ENCODE measurements at regions of chr3 and their contacts with region 1.

Region 1: GRCh38 chr3:124834723-124835718 is 52.1 kb downstream of the ITGB5 start:
- DNase-seq: peak; percentile 45 to 74 (median 67)
- ATAC-seq: peak in 3 of 4 donors; percentile 40 to 66 (median 50)
- H3K4me3 ChIP-seq: peak overlapping the region in 2 of 12 donors; percentile 8 to 19
- H3K27ac ChIP-seq: peak overlapping the region; percentile 6 to 92 (median 80)
- H3K4me1 ChIP-seq: peaks cover 12 to 90% (median 76%) of the 10 kb centered on the region in 12 donors
- H3K27me3 ChIP-seq: no peaks in the 10 kb centered on the region
- CTCF ChIP-seq: no peak
- POLR2A ChIP-seq: no peak

Region 2: DNA sequence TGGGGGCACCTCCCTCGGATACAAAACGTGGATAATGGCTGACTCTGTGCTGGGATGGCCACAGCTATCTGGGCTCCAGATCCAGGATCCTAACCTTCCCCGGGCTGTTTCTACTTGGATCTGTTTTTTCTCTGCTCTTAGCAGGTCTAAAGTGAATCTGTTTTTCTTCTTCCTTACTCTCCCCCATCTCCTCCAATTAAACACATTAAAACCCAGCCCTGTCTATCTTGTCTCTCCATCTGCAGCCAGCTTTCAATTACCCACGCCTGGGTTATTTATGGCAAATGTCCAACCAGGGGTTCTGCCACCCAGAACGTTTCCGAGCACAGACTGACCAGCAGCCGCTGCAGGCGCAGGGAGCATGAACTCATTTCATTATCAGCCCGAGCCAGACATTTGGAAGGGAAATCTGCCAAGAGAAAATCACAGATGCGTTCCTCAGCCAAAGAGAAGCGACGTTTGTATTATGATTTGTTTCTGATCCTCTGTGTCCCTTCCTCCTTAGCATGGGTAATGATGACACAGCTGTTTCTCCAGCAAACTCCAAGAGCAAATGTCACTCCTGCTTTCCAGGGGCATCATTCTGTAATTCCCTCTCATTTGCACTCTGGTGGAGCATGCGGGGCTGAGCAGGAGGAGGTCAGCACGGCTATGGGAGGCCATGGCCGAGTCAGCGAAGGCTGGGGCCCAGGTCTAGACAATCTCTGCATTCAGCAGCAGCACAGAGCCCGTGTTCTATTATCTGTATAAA is 62.8 kb before region 1 on chr3:
- intact Hi-C with region 1: loop called in 1 of 10 experiments (anchors 10 kb)
- DNase-seq: peak in 4 of 5 donors; percentile 62 to 73 (median 66)
- ATAC-seq: peak; percentile 35 to 60 (median 49)
- H3K4me3 ChIP-seq: no peak overlapping the region
- H3K27ac ChIP-seq: peak overlapping the region; percentile 22 to 76 (median 70)
- H3K4me1 ChIP-seq: peaks cover 14 to 85% (median 59%) of the 10 kb centered on the region in 12 donors
- H3K27me3 ChIP-seq: no peaks in the 10 kb centered on the region
- CTCF ChIP-seq: no peak
- POLR2A ChIP-seq: no peak

Region 3: GRCh38 chr3:124780761-124781475 is 54.1 kb before region 1 on chr3:
- intact Hi-C with region 1: loop called in 5 of 10 experiments (anchors 5 to 10 kb)
- DNase-seq: peak; percentile 88 to 94 (median 89)
- ATAC-seq: peak; percentile 88 to 91 (median 89)
- H3K4me3 ChIP-seq: peak overlapping the region in 4 of 12 donors; percentile 8 to 20 (median 12)
- H3K27ac ChIP-seq: peak overlapping the region; percentile 77 to 95 (median 91)
- H3K4me1 ChIP-seq: peaks cover 6 to 97% (median 55%) of the 10 kb centered on the region in 12 donors
- H3K27me3 ChIP-seq: no peaks in the 10 kb centered on the region
- CTCF ChIP-seq: no peak
- POLR2A ChIP-seq: peak in 1 of 2 donors; percentile 36

Region 4: DNA sequence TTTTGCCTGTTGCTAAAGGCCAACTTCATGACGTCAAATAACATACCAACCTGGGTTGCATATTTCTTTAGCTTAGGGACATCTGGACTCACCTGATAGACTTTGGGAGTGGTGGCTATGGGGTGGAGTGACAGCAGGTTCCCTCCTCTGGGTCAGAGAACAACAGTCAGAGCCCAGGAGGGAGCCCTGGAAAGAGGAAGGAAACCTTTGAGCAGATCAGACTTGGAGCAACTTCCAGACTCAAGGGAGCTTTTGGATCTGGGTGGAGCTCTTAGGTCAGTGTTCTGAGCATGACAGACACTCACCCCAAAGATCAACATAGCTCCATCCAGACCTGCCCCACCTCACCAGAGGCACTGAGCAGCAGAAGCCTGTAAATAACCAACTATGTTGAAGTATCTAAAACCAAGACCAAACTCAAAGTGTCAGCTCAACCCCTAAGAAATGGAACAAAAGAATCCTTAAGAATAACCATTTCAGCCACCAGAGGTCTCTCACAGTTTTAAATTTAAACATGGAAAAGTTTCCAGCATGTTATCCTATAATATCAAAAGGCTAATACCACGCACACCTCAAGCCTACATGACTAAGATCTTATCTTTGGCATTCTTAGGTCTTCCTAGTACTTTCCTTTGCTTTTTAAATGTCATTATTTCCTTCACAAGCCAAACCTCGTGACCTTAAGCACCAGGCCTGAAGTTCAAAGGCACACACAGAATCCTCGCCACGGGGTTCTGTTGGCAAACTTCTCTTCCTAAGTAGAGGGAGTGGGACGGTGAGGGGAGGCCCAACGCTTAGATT is 48.4 kb before region 1 on chr3:
- intact Hi-C with region 1: loop called in 4 of 10 experiments (anchors 5 to 10 kb)
- DNase-seq: no peak
- ATAC-seq: peak in 3 of 4 donors; percentile 22 to 67 (median 57)
- H3K4me3 ChIP-seq: no peak overlapping the region
- H3K27ac ChIP-seq: peak overlapping the region; percentile 48 to 84 (median 74)
- H3K4me1 ChIP-seq: peaks cover 9 to 87% (median 67%) of the 10 kb centered on the region in 12 donors
- H3K27me3 ChIP-seq: no peaks in the 10 kb centered on the region
- CTCF ChIP-seq: peak in 11 of 12 donors; percentile 17 to 62 (median 46)
- POLR2A ChIP-seq: no peak

Region 5: GRCh38 chr3:124860599-124860998 is 25.6 kb after region 1 on chr3:
- intact Hi-C with region 1: loop called in 1 of 10 experiments (anchors 2 kb)
- DNase-seq: peak in 4 of 5 donors; percentile 78 to 89 (median 84)
- ATAC-seq: peak; percentile 86 to 95 (median 92)
- H3K4me3 ChIP-seq: no peak overlapping the region
- H3K27ac ChIP-seq: peak overlapping the region; percentile 31 to 84 (median 70)
- H3K4me1 ChIP-seq: peaks cover 6 to 64% (median 37%) of the 10 kb centered on the region in 12 donors
- H3K27me3 ChIP-seq: no peaks in the 10 kb centered on the region
- CTCF ChIP-seq: no peak
- POLR2A ChIP-seq: no peak

Region 6: DNA sequence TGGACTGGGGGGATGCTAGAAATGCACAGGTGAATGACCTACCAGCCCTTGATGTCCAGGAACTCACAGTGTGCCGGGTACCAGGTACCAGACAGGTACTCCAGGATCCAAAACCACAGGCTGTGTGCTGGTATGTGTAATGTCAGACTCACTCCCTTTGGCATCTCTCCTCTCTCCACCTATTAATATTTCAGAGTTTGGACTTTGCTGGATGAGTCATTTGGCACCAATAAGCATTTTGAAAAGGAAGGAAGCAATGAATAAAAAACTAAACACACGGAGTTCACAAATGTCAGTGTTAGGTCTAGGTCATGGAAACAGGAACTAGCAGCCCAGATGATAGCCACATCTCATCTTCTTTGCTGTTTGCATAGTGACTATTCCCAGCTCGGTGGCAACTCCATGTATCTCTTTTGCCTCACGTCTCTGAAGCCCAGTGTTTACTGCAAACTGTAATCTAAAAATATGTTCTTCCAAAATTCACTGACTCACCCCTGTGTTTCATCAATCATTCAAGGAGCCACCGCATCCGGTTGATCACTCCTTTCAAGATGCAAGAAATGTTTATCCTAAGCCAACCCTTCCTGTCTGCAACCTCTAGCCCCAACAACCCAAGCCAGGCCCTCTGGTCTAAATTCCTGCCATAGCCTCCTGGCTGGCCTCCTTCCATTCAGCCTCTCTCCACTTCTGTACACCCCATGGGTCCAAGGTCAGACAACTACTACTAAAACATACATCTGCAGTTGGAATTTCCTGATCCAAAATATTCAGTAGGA is 43.7 kb after region 1 on chr3:
- intact Hi-C with region 1: loop called in 4 of 10 experiments (anchors 5 to 10 kb)
- DNase-seq: peak in 2 of 5 donors; percentile 34 to 52
- ATAC-seq: peak; percentile 69 to 84 (median 81)
- H3K4me3 ChIP-seq: no peak overlapping the region
- H3K27ac ChIP-seq: peak overlapping the region; percentile 44 to 84 (median 62)
- H3K4me1 ChIP-seq: peaks cover 6 to 78% (median 65%) of the 10 kb centered on the region in 12 donors
- H3K27me3 ChIP-seq: no peaks in the 10 kb centered on the region
- CTCF ChIP-seq: no peak
- POLR2A ChIP-seq: no peak

Region 7: GRCh38 chr3:124887177-124887931 is 52.3 kb after region 1 on chr3 and contains the start of gene ITGB5:
- intact Hi-C with region 1: loop called in 6 of 10 experiments (anchors 2 to 10 kb)
- DNase-seq: peak; percentile 83 to 90 (median 85)
- ATAC-seq: peak; percentile 74 to 94 (median 88)
- H3K4me3 ChIP-seq: peak within 1 kb of the TSS; percentile 62 to 99 (median 88)
- H3K27ac ChIP-seq: peak within 1 kb of the TSS; percentile 77 to 97 (median 96)
- H3K4me1 ChIP-seq: peaks cover 0 to 46% (median 31%) of the 10 kb centered on the region in 12 donors
- H3K27me3 ChIP-seq: peaks cover 0 to 15% (median 0%) of the 10 kb centered on the region in 9 donors
- CTCF ChIP-seq: no peak
- POLR2A ChIP-seq: peak in 1 of 2 donors; percentile 83
- total RNA-seq, gene ITGB5: 96.3 to 223 (median 118) TPM

Region 8: DNA sequence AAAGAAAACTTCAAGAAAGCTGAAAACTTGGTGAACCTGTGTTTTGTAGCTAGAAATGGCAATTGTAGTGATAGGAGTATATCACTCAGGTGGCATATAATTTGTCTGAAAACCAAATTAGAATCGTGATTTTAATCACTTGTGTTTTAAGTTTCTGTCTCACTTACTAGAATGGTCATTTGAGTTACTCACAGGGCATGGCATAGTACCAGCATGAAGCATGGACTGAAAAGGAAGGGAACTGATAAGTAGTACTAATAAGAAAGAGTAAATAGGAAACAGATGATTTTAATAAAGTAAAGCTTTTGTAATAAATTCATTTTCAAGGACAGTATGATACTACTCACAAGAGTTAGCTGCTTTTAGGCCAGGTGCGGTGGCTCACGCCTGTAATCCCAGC is 738.2 kb after region 1 on chr3:
- intact Hi-C with region 1: no loop called
- DNase-seq: no peak
- ATAC-seq: no peak
- H3K4me3 ChIP-seq: no peak overlapping the region
- H3K27ac ChIP-seq: no peak overlapping the region
- H3K4me1 ChIP-seq: no peaks in the 10 kb centered on the region
- H3K27me3 ChIP-seq: no peaks in the 10 kb centered on the region
- CTCF ChIP-seq: no peak
- POLR2A ChIP-seq: no peak